Gastrocnemius medialis (tissue), 4 donors: ENCODE measurements at regions of chr16 and their contacts with region 1.

Region 1: GRCh38 chr16:19771796-19772195 is 53.7 kb downstream of the IQCK start:
- DNase-seq: no peak
- ATAC-seq: no peak
- H3K4me3 ChIP-seq: no peak overlapping the region
- H3K27ac ChIP-seq: no peak overlapping the region
- H3K4me1 ChIP-seq: no peaks in the 10 kb centered on the region
- H3K27me3 ChIP-seq: no peaks in the 10 kb centered on the region
- CTCF ChIP-seq: no peak
- POLR2A ChIP-seq: no peak

Region 2: DNA sequence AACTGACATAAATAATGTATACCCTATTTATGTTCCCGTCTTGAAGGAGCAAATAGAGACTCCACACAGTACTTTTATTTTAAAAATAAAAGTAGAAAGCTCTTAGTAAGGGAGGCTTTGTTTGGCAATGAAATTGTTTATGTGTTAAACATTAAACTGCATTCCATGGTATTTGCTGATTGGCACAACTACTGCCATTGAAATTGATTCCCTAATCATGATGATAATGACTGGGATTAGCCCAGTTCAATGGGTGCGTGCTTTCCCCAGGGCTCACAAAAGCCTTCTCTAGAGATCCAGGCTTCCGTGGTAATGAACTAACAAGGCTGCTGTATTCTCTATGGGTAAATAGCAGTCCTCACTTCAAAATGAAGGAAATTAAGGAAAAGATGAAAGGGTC is 45.3 kb after region 1 on chr16:
- in situ Hi-C with region 1: loop called in 1 of 4 experiments (anchors 5 kb)
- intact Hi-C with region 1: no loop called
- DNase-seq: no peak
- ATAC-seq: no peak
- H3K4me3 ChIP-seq: no peak overlapping the region
- H3K27ac ChIP-seq: no peak overlapping the region
- H3K4me1 ChIP-seq: no peaks in the 10 kb centered on the region
- H3K27me3 ChIP-seq: no peaks in the 10 kb centered on the region
- CTCF ChIP-seq: no peak
- POLR2A ChIP-seq: no peak